CD14-positive monocyte (primary cell): ENCODE measurements at regions of chr15 and their contacts with region 1.

Region 1: GRCh38 chr15:58749532-58750337 is at the start of gene ADAM10:
- DNase-seq: peak; percentile 99
- H3K4me3 ChIP-seq: peak within 1 kb of the TSS; percentile 61 to 82 (median 82)
- H3K4me3 Mint-ChIP-seq: peak within 1 kb of the TSS; percentile 97 to 98
- H3K27ac ChIP-seq: peak within 1 kb of the TSS; percentile 83 to 96
- H3K27ac Mint-ChIP-seq: peak within 1 kb of the TSS; percentile 95 to 98 (median 98)
- H3K4me1 ChIP-seq: peaks cover 27 to 36% of the 10 kb centered on the region in 2 donors
- H3K4me1 Mint-ChIP-seq: peaks cover 34% of the 10 kb centered on the region
- H3K27me3 ChIP-seq: no peaks in the 10 kb centered on the region
- H3K27me3 Mint-ChIP-seq: peaks cover 0 to 3% (median 0%) of the 10 kb centered on the region in 3 donors
- CTCF ChIP-seq: no peak
- polyA plus RNA-seq, gene ADAM10: 66.0 to 269 (median 149) TPM

Region 2: GRCh38 chr15:58510715-58511598 is 238.8 kb before region 1 on chr15:
- intact Hi-C with region 1: no loop called
- DNase-seq: no peak
- H3K4me3 ChIP-seq: no peak overlapping the region
- H3K4me3 Mint-ChIP-seq: no peak overlapping the region
- H3K27ac ChIP-seq: no peak overlapping the region
- H3K27ac Mint-ChIP-seq: no peak overlapping the region
- H3K4me1 ChIP-seq: peaks cover 22 to 31% of the 10 kb centered on the region in 2 donors
- H3K4me1 Mint-ChIP-seq: peaks cover 34% of the 10 kb centered on the region
- H3K27me3 ChIP-seq: no peaks in the 10 kb centered on the region
- H3K27me3 Mint-ChIP-seq: peaks cover 0 to 2% (median 1%) of the 10 kb centered on the region in 3 donors
- CTCF ChIP-seq: no peak

Region 3: DNA sequence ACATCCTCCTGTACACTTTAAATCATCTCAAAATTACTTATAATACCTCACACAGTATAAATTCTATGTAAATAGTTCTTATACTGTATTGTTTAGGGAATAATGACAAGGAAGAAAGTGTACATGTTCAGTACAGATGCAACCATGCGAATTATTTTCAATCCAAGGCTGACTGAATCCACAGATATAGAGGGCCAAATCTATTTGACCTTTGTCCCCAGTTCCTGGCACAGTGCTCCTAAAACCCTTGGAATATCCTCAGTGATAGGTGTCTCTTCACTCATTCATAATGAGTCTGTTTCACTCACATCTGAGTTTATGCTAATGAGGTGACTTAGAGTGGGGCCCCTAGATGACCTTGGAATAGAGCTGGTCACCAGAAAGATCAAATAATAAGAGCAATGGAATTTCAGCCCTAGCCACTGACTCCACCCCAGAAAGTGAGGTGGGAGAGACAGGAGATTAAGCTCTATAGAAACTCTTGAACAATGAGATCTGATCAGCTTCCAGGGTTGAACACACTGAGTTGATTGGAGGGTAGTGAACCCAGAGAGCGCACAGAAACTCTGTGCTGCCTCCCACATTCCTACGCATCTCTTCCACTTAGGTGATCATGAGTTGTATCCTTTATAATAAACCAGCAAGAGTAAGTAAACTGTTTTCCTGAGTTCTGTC is 65.6 kb before region 1 on chr15:
- intact Hi-C with region 1: loop called in 1 of 2 experiments (anchors 10 kb)
- DNase-seq: no peak
- H3K4me3 ChIP-seq: no peak overlapping the region
- H3K4me3 Mint-ChIP-seq: no peak overlapping the region
- H3K27ac ChIP-seq: no peak overlapping the region
- H3K27ac Mint-ChIP-seq: peak overlapping the region in 3 of 7 donors; percentile 0 to 22 (median 11)
- H3K4me1 ChIP-seq: no peaks in the 10 kb centered on the region
- H3K4me1 Mint-ChIP-seq: peaks cover 2% of the 10 kb centered on the region
- H3K27me3 ChIP-seq: no peaks in the 10 kb centered on the region
- H3K27me3 Mint-ChIP-seq: no peaks in the 10 kb centered on the region
- CTCF ChIP-seq: no peak

Region 4: GRCh38 chr15:58933281-58934113 is 183.8 kb after region 1 on chr15 and contains the start of gene SLTM:
- intact Hi-C with region 1: loop called in 1 of 2 experiments (anchors 10 kb)
- DNase-seq: peak; percentile 92 to 93 (median 92)
- H3K4me3 ChIP-seq: peak within 1 kb of the TSS; percentile 74 to 95 (median 90)
- H3K4me3 Mint-ChIP-seq: peak within 1 kb of the TSS; percentile 96 to 99
- H3K27ac ChIP-seq: peak within 1 kb of the TSS; percentile 93 to 99
- H3K27ac Mint-ChIP-seq: peak within 1 kb of the TSS; percentile 99 to 100 (median 100)
- H3K4me1 ChIP-seq: peaks cover 22 to 30% of the 10 kb centered on the region in 2 donors
- H3K4me1 Mint-ChIP-seq: peaks cover 20% of the 10 kb centered on the region
- H3K27me3 ChIP-seq: no peaks in the 10 kb centered on the region
- H3K27me3 Mint-ChIP-seq: no peaks in the 10 kb centered on the region
- CTCF ChIP-seq: peak; percentile 25
- polyA plus RNA-seq, gene SLTM: 26.5 to 105 (median 34.3) TPM